HepG2 (cell line): ENCODE measurements at regions of chr22 and their contacts with region 1.

Region 1: GRCh38 chr22:39625569-39626537 is 55.3 kb downstream of the CACNA1I start:
- DNase-seq: no peak
- ATAC-seq: no peak
- H3K4me3 ChIP-seq: no peak overlapping the region
- H3K27ac ChIP-seq: no peak overlapping the region
- H3K4me1 ChIP-seq: no peaks in the 10 kb centered on the region
- H3K27me3 ChIP-seq: peaks cover 6 to 32% of the 10 kb centered on the region in 2 experiments; a peak in 3 of 5 replicates
- CTCF ChIP-seq: no peak
- EP300 ChIP-seq: no peak
- POLR2A ChIP-seq: no peak
- RAD21 ChIP-seq: no peak

Region 2: GRCh38 chr22:39592134-39593065 is 33.5 kb before region 1 on chr22:
- CTCF ChIA-PET with region 1: no interaction called
- POLR2A ChIA-PET with region 1: no interaction called
- in situ Hi-C with region 1: no loop called
- intact Hi-C with region 1: no loop called
- DNase-seq: no peak
- ATAC-seq: no peak; the same call in 1 of the 3 replicates
- H3K4me3 ChIP-seq: no peak overlapping the region
- H3K27ac ChIP-seq: no peak overlapping the region
- H3K4me1 ChIP-seq: no peaks in the 10 kb centered on the region
- H3K27me3 ChIP-seq: peaks cover 4 to 50% of the 10 kb centered on the region in 2 experiments
- CTCF ChIP-seq: no peak
- EP300 ChIP-seq: no peak
- POLR2A ChIP-seq: no peak
- RAD21 ChIP-seq: no peak

Region 3: DNA sequence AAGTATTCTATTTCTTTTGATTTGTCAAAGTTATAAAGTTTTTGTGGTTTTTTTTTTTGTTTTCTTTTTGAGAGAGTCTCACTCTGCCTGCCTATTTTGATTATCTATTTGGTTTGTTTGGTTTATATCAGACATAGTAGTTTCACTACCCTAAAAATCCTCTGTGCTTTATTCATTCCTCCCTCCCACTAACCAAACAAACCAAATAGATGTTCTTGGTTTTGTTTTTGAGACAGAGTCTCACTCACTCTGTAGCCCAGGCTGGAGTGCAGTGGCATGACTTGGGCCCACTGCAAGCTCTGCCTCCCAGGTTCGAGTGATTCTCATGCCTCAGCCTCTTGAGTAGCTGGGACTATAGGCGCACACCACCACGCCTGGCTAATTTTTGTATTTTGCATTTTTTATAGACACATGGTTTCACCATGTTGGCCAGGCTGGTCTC is 199.8 kb after region 1 on chr22:
- CTCF ChIA-PET with region 1: no interaction called
- POLR2A ChIA-PET with region 1: no interaction called
- in situ Hi-C with region 1: no loop called
- intact Hi-C with region 1: no loop called
- DNase-seq: no peak
- ATAC-seq: no peak
- H3K4me3 ChIP-seq: no peak overlapping the region
- H3K27ac ChIP-seq: no peak overlapping the region
- H3K4me1 ChIP-seq: no peaks in the 10 kb centered on the region
- H3K27me3 ChIP-seq: peaks cover 0 to 5% of the 10 kb centered on the region in 2 experiments; a peak in 1 of 5 replicates
- CTCF ChIP-seq: no peak
- EP300 ChIP-seq: no peak
- POLR2A ChIP-seq: no peak
- RAD21 ChIP-seq: no peak

Region 4: DNA sequence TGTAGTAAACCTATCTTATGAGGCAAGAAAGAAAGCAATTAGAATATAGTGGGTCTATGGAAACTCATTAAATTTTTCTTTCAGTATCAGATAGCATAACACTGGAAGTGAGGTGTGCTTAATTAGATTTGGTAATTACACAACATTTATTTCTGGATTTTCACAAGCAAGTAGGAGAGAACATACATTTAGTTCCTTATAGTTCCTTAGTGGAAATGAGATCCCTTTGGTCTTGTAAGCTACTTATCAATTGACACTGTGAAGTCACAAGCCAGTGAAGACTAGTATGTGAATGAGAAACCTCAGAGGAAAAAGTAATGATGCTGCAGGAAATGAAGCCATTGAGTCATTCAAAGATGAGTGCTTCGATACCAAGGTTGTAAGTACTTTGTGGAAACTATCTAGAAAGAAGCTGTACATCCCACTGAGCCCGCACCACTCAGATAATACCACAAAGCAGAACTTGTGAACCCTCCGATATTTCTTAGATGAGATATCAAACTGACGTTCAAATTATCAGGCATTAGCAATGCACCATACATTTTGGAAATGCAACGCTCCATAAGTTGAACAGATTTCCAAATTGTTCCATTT is 214.2 kb after region 1 on chr22:
- CTCF ChIA-PET with region 1: no interaction called
- POLR2A ChIA-PET with region 1: no interaction called
- in situ Hi-C with region 1: no loop called
- intact Hi-C with region 1: no loop called
- DNase-seq: no peak
- ATAC-seq: no peak
- H3K4me3 ChIP-seq: no peak overlapping the region
- H3K27ac ChIP-seq: no peak overlapping the region
- H3K4me1 ChIP-seq: no peaks in the 10 kb centered on the region
- H3K27me3 ChIP-seq: no peaks in the 10 kb centered on the region
- CTCF ChIP-seq: no peak
- EP300 ChIP-seq: no peak
- POLR2A ChIP-seq: no peak
- RAD21 ChIP-seq: no peak

Region 5: GRCh38 chr22:40036591-40037225 is 410.9 kb after region 1 on chr22:
- CTCF ChIA-PET with region 1: no interaction called
- POLR2A ChIA-PET with region 1: no interaction called
- in situ Hi-C with region 1: loop called (anchors 5 kb)
- intact Hi-C with region 1: no loop called
- DNase-seq: peak; percentile 64
- ATAC-seq: peak; percentile 94
- H3K4me3 ChIP-seq: no peak overlapping the region
- H3K27ac ChIP-seq: no peak overlapping the region
- H3K4me1 ChIP-seq: peaks cover 14% of the 10 kb centered on the region
- H3K27me3 ChIP-seq: peaks cover 2 to 44% of the 10 kb centered on the region in 2 experiments; a peak in 4 of 5 replicates
- CTCF ChIP-seq: peak; percentile 97
- EP300 ChIP-seq: no peak
- POLR2A ChIP-seq: no peak
- RAD21 ChIP-seq: peak; percentile 91